PC-3 (cell line): ENCODE measurements at regions of chr18 and their contacts with region 1.

Region 1: DNA sequence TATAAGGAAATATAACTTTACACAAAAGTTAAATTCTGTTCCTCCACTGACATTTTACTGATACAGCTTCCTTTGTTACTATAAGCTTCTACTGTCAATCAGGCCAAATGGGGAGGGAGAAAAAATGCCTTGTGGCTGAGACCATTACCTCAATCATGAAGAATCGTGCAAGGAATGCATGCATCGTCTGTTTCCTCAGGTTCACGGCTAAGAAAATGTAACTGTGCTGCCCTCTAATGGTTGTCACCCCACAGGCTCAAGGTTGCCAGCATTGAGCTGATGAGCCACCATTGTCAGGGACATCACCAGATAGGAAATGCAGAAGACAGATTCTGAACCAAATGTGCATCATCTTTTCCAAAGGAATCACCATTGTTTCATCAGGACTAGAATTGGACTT is 426.9 kb downstream of the CDH2 start:
- DNase-seq: peak; percentile 77
- ATAC-seq: peak; percentile 91
- H3K4me3 ChIP-seq: no peak overlapping the region
- H3K27ac ChIP-seq: no peak overlapping the region
- H3K4me1 ChIP-seq: no peaks in the 10 kb centered on the region
- H3K27me3 ChIP-seq: no peaks in the 10 kb centered on the region
- CTCF ChIP-seq: peak; percentile 84

Region 2: DNA sequence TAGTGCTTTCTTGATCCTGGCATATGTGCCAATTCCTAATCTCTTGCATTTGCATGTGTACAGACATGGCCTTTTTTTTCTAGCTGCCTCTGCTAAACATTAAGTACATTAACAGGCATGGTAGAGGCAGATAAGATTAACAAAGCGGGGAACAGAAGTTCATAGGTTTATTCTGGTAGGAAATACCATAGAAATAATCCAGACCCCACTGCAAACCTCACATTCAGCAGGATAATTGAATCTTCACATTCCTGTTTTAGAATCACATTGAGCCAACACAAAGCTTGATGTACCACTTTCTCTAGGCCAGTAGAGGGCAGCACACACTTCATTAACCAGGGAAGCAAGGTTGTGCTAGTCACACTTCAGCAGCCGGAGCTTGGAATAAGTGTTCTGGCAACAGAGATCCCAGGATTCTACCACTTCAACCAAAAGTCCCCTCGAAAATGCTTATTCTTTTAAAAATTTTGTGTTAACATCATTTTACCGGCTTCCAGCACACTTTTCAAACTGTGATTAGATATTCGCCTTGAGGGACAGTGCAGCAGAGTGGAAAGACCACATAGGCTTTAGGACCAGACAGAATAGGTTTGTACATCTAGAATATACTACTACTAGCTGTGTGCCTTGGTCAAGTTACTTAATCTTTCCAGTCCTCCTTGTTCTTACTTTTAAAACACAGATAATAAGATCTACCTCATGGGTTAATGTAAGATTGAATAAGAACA is 144.7 kb before region 1 on chr18:
- CTCF ChIA-PET with region 1: interaction called, 17 read pairs
- POLR2A ChIA-PET with region 1: no interaction called
- intact Hi-C with region 1: loop called (anchors 1 kb)
- DNase-seq: peak; percentile 83
- ATAC-seq: peak; percentile 93
- H3K4me3 ChIP-seq: no peak overlapping the region
- H3K27ac ChIP-seq: no peak overlapping the region
- H3K4me1 ChIP-seq: peaks cover 11% of the 10 kb centered on the region
- H3K27me3 ChIP-seq: no peaks in the 10 kb centered on the region
- CTCF ChIP-seq: peak; percentile 87

Region 3: GRCh38 chr18:27685807-27686412 is 64.1 kb before region 1 on chr18:
- CTCF ChIA-PET with region 1: interaction called, 4 read pairs
- POLR2A ChIA-PET with region 1: no interaction called
- intact Hi-C with region 1: loop called (anchors 1 kb)
- DNase-seq: peak; percentile 69
- ATAC-seq: peak; percentile 27; the same call in 1 of the 2 replicates
- H3K4me3 ChIP-seq: no peak overlapping the region
- H3K27ac ChIP-seq: no peak overlapping the region
- H3K4me1 ChIP-seq: no peaks in the 10 kb centered on the region
- H3K27me3 ChIP-seq: no peaks in the 10 kb centered on the region
- CTCF ChIP-seq: peak; percentile 91

Region 4: GRCh38 chr18:27785815-27786471 is 35.9 kb after region 1 on chr18:
- CTCF ChIA-PET with region 1: no interaction called
- POLR2A ChIA-PET with region 1: no interaction called
- intact Hi-C with region 1: no loop called
- DNase-seq: no peak
- ATAC-seq: no peak
- H3K4me3 ChIP-seq: no peak overlapping the region
- H3K27ac ChIP-seq: no peak overlapping the region
- H3K4me1 ChIP-seq: peaks cover 16% of the 10 kb centered on the region
- H3K27me3 ChIP-seq: no peaks in the 10 kb centered on the region
- CTCF ChIP-seq: no peak

Region 5: DNA sequence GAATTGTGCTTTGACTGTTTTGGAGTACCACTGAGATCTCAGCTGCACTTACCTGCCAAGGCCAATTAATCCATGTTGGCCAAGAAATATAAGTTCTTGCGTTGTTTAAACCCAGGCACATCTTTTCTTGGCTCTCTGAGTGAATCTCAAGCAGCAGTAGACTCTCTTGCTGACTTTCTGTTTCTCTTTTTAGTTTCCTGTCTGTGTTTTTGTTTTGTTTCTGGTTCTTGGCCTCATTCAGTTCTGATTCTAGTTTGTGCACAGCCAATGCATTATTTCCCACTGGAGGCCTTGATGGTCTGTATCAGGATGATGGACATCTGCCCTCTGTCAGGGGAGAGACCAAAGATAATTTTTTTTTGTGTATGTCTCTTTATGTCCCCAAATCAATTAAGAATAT is 47.5 kb after region 1 on chr18:
- CTCF ChIA-PET with region 1: no interaction called
- POLR2A ChIA-PET with region 1: no interaction called
- intact Hi-C with region 1: no loop called
- DNase-seq: no peak
- ATAC-seq: no peak
- H3K4me3 ChIP-seq: no peak overlapping the region
- H3K27ac ChIP-seq: no peak overlapping the region
- H3K4me1 ChIP-seq: no peaks in the 10 kb centered on the region
- H3K27me3 ChIP-seq: no peaks in the 10 kb centered on the region
- CTCF ChIP-seq: no peak

Region 6: GRCh38 chr18:28171837-28172236 is 421.8 kb after region 1 on chr18:
- CTCF ChIA-PET with region 1: interaction called, 13 read pairs
- POLR2A ChIA-PET with region 1: no interaction called
- intact Hi-C with region 1: no loop called
- DNase-seq: no peak
- ATAC-seq: no peak
- H3K4me3 ChIP-seq: no peak overlapping the region
- H3K27ac ChIP-seq: no peak overlapping the region
- H3K4me1 ChIP-seq: peaks cover 27% of the 10 kb centered on the region
- H3K27me3 ChIP-seq: no peaks in the 10 kb centered on the region
- CTCF ChIP-seq: no peak